GM10248 (cell line): ENCODE measurements at regions of chr20 and their contacts with region 1.

Region 1: DNA sequence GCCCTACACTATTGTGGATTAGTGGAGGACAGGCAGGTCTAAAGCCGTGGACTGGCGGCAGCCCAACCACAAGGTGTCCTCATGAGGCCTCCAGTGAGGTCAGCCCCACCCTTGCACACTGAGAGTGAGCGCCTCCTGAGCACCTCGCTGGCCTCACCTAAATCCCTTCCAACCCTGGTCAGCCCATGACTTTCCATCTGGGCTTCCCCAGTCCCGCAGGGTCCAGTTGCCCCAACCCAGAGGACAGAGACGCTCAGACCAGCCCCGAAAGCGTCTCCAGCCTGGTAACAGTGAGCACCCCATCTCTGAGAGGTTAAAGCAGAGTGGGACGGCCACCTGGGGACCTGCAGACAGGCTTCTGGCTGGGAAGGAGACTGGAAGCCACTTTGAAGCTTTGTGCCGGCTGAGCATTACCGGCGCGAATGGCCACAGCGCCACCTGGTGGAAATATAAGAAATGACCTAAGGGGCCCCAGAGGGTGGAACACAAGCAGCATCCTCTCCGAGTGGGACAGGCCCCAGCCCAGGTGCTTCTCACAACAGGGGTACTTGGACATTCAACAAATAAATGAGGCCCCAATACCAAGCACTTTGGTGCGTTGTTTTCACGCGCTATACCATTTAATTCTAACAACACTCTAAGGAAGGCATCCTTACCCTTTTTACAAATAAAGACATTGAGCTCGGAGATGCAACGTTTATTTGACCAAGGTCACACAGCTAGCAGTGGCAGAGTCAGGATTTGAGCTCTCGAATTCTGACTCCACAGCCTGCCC is 65.7 kb upstream of the TOP1 start:
- DNase-seq: peak; percentile 82
- CTCF ChIP-seq: peak; percentile 91

Region 2: DNA sequence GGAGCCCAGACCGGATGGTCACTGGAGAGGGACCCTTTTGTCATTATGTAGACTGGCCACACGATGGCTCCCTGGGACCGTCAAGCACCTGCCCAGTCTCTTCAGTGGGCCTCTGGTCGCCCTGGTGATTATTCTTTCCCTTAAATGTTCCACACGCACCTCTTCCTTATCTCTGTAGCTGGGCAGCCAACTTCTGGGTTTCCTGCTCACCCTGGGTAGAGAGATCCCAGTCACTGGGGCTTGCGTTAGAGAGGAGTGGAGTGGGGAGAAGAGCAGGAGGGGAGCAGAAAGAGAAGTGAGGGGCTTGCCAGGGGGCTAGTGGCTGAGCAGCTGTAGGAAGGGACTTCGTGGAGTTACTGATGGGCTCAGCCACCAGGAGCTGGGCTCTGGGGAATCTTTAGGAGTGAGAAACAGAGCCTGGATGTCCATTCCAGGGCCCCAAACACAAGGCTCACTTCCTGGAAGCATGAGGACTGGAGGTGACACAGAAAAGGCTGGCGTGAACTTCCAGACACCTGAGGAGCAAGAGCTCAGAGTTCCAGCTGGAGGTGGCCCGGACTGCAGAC is 1850.7 kb before region 1 on chr20:
- CTCF ChIA-PET with region 1: interaction called, 14 read pairs
- POLR2A ChIA-PET with region 1: no interaction called
- DNase-seq: peak; percentile 77
- CTCF ChIP-seq: peak; percentile 57

Region 3: GRCh38 chr20:39264506-39265172 is 1698.3 kb before region 1 on chr20:
- CTCF ChIA-PET with region 1: interaction called, 16 read pairs
- POLR2A ChIA-PET with region 1: no interaction called
- DNase-seq: peak; percentile 56
- CTCF ChIP-seq: peak; percentile 88

Region 4: GRCh38 chr20:39885975-39886649 is 1076.8 kb before region 1 on chr20:
- CTCF ChIA-PET with region 1: interaction called, 11 read pairs
- POLR2A ChIA-PET with region 1: no interaction called
- DNase-seq: peak; percentile 34
- CTCF ChIP-seq: peak; percentile 60

Region 5: GRCh38 chr20:40741507-40742106 is 221.3 kb before region 1 on chr20:
- CTCF ChIA-PET with region 1: interaction called, 45 read pairs
- POLR2A ChIA-PET with region 1: no interaction called
- DNase-seq: peak; percentile 48
- CTCF ChIP-seq: peak; percentile 58

Region 6: DNA sequence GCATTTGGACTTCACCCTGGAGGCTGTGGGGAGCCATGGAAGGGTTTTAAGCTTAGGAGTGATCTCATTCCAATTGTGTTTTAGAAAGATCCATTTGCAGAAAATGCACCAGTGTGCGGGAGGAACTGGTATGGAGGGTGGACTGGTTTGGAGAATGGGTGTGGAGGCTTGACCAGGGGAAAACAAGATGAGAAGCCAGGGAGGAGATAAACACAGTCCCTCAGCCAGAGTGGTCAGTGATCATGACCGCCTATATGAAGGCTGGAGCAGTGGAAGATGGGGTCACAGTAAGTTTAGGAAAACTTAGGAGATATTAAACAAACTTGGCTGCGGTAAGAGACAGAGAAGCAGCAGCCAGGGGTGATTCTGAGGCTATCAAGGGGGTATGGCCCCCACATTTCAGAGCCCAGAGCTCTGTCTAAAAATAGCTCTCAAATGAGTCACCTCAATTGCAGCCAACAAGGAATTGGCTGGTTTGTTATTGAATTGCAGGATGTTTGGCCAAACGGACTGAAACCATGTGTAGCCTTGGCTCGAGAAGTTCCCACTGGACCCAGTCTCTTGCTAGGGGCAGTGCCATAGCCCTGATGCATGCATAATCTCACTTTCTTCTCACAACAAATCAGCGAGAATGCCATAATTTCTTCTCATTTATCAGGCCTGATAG is 94.2 kb before region 1 on chr20:
- CTCF ChIA-PET with region 1: no interaction called
- POLR2A ChIA-PET with region 1: no interaction called
- DNase-seq: no peak
- CTCF ChIP-seq: no peak

Region 7: GRCh38 chr20:40941133-40941610 is 21.7 kb before region 1 on chr20:
- CTCF ChIA-PET with region 1: interaction called, 18 read pairs
- POLR2A ChIA-PET with region 1: no interaction called
- DNase-seq: no peak
- CTCF ChIP-seq: no peak

Region 8: DNA sequence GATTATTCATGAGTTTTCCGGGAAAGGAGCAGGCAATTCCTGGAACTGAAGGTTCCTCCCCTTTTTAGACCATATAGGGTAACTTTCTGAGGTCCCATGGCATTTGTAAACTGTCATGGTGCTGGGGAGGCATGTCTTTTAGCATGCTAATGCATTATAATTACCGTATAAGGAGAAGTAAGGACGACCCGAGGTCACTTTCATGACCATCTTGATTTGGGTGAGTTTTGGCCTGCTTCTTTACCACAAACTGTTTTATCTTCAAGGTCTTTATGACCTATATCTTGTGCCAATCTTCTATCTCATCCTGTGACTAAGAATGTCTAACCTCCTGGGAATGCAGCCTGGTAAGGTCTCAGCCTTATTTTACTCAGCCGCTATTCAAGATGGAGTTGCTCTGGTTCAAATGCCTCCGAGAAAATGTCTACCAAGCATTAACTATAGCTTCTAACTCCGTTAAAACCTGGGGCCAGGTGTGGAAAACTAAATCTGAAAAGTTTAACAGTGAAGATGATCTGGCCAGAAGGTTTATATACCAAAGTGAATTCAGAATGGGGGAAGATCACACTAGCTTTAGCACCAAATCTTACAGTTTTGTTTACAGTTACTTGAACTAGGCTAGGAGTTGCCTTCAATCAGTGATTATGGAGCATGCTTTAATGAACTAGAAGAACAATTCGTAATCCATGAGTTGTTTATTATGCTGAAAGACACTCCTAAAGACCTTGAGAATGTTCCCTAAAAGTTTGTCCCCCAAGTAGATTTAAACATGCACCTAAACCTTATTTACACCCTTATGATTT is 14.3 kb before region 1 on chr20:
- CTCF ChIA-PET with region 1: interaction called, 30 read pairs
- POLR2A ChIA-PET with region 1: no interaction called
- DNase-seq: no peak
- CTCF ChIP-seq: no peak

Region 9: DNA sequence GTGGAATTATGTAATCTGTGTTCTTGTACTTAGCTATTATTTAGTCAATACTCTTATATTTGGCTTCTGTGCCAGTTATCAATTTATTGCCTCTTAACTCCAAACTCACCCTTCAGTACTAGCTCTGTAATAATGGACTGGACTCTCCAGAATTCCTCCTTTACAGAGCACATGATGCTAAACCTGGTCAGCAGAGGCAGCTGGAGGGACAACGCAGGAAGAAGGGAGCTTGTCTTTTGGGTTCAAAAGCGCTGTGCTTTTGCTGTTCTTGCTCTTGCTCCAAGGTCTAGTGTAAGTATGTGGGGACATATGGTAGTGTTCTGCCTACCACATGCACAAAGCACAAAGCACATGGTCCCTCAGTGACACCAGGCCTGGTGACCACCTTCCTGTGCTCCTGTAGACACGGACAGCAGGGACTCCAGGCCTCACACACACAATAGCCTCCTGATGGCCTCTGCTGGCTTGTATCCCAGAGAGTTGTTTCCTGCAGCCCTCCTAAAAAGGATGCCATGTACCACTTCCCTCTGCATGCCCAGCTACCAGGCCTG is 609.2 kb after region 1 on chr20:
- CTCF ChIA-PET with region 1: no interaction called
- POLR2A ChIA-PET with region 1: no interaction called
- DNase-seq: no peak
- CTCF ChIP-seq: peak; percentile 11